ENCODE measurements at regions of chr3 and their contacts with region 1.

Region 1: GRCh38 chr3:28286595-28286994 is 45.2 kb downstream of the CMC1 start:
- DNase-seq: no peak
- ATAC-seq: peak in 6 of 8 donors; percentile 49 to 85 (median 68)
- H3K4me3 ChIP-seq: no peak overlapping the region
- H3K27ac ChIP-seq: no peak overlapping the region
- H3K4me1 ChIP-seq: peaks cover 0 to 14% (median 0%) of the 10 kb centered on the region in 9 donors
- H3K27me3 ChIP-seq: no peaks in the 10 kb centered on the region
- CTCF ChIP-seq: peak; percentile 29 to 69 (median 58)

Region 2: GRCh38 chr3:28077572-28077971 is 209.0 kb before region 1 on chr3:
- intact Hi-C with region 1: loop called in 1 of 10 experiments (anchors 10 kb)
- DNase-seq: peak in 1 of 2 donors; percentile 20
- ATAC-seq: peak in 3 of 8 donors; percentile 61 to 65 (median 64)
- H3K4me3 ChIP-seq: no peak overlapping the region
- H3K27ac ChIP-seq: no peak overlapping the region
- H3K4me1 ChIP-seq: no peaks in the 10 kb centered on the region
- H3K27me3 ChIP-seq: no peaks in the 10 kb centered on the region
- CTCF ChIP-seq: peak in 5 of 9 donors; percentile 10 to 35 (median 28)

Region 3: DNA sequence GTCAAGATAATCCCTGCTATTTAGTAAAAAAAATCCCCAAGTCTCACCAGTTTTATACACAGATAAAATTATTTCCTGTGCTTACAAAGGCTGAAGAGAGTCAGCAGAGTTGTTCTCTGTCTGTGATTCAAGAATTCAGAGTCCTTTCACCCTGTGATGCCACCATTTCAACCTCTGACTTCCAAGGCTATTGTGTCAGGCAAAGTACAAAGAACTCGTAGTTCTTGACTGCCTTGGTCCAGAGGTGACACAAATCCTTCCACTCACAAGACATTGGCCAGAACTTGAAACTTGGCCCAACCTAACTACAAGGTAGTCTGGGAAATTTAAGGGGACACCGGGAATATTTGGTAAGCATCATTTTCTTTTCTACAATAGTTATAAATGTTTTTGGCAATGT is 80.1 kb before region 1 on chr3:
- intact Hi-C with region 1: no loop called
- DNase-seq: no peak
- ATAC-seq: peak in 2 of 8 donors; percentile 38 to 71
- H3K4me3 ChIP-seq: peak overlapping the region in 2 of 10 donors; percentile 9 to 22
- H3K27ac ChIP-seq: no peak overlapping the region
- H3K4me1 ChIP-seq: peaks cover 0 to 6% (median 0%) of the 10 kb centered on the region in 9 donors
- H3K27me3 ChIP-seq: peaks cover 0 to 5% (median 0%) of the 10 kb centered on the region in 7 donors
- CTCF ChIP-seq: no peak